ENCODE measurements at regions of chr19 and their contacts with region 1.

Region 1: DNA sequence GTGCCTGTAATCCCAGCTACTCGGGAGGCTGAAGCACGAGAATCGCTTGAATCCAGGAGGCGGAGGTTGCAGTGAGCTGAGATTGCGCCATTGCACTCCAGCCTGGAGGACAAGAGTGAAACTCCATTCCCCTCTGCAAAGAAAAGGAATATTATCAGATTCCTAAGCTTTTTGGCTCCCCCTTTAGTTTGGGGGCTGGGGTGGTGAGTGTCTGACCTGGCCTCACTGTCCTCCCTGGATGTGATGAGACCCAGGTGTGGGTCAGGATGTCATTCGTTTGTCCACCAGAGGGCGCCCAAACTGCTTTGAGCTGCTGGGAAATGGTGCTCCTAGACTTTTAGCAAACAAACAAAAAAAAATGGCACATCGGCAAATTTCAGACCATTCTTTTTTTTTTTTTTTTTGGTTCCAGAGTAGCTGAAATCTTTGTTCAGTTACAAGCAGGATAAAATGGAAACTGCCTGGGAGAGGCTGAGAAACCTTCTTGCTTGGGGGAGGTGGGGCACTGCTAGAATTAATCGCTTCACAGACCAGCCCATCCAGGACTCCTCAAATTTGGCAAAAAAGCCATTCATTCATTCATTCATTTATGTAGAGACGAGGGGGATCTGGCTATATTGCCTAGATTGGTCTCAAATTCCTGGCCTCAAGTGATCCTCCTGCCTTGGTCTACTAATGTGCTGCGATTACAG is 29.4 kb downstream of the SPC24 start:
- DNase-seq: peak; percentile 82
- H3K4me3 Mint-ChIP-seq: no peak overlapping the region
- H3K27ac Mint-ChIP-seq: no peak overlapping the region
- H3K4me1 Mint-ChIP-seq: no peaks in the 10 kb centered on the region
- H3K27me3 Mint-ChIP-seq: no peaks in the 10 kb centered on the region

Region 2: DNA sequence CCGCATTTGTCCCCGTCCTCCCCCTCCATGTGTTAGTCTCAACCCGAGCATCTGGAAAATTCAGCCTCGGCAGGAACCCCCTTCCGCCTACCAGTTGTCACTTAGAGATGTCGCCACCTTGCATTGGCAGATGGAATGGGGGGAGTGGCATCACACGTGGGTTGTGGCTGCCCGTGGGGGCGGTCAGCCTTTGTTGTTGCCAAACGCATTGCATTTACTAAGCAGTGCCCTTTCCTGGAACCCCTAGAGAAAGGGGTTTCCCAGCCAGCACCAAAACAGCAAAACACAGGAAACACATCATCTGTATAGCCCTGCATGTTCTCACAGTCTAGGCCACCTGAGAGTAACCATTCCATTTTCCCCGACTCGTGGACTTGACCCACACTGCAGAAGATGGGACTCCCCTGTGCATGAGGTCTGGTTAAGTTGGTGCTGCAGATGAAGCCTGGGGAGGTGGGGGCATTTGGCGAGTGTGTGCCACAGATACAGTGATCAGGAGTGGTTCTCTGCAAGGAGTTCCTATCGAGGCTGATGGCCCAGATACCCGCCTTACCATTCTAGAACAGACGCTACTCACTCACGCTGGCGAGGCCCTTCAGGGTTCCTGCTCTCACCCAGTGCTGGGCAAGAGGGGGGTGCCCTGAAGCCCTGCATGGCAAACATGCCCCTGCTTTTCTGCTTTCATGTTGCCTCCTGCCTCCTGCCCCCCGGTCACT is 328.4 kb before region 1 on chr19:
- CTCF ChIA-PET with region 1: no interaction called
- POLR2A ChIA-PET with region 1: no interaction called
- intact Hi-C with region 1: no loop called
- DNase-seq: peak; percentile 98
- H3K4me3 Mint-ChIP-seq: peak overlapping the region; percentile 76
- H3K27ac Mint-ChIP-seq: peak overlapping the region; percentile 99
- H3K4me1 Mint-ChIP-seq: peaks cover 32% of the 10 kb centered on the region
- H3K27me3 Mint-ChIP-seq: no peaks in the 10 kb centered on the region

Region 3: DNA sequence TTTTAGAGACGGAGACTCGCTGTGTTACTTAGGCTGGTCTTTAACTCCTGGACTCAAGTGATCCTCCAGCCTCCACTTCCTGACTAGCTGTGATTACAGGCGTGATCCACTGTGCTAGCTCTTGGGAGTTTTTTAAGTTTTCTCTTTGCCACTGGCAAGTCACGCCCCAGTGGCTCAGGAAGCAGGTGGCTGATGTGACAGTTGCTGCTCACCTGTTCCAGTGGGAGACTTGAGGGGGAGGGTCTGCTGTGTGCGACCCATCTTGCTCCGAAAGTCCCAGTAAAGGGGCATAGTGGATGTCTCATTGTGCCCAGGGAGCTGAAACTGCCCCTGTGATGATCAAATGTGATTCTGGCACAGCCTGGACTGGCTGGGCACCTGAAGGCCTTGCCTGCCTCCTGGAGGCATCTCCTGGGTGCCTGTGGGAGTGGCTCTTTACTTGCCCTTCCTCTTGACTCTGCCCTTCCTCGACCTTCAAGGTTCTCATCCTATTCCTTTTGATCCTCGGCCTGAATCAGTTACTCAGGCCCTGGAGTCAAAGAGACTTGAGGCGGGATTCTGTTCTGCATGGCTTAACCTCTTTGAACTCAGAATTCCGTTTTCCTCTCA is 157.5 kb before region 1 on chr19:
- CTCF ChIA-PET with region 1: no interaction called
- POLR2A ChIA-PET with region 1: no interaction called
- intact Hi-C with region 1: no loop called
- DNase-seq: no peak
- H3K4me3 Mint-ChIP-seq: no peak overlapping the region
- H3K27ac Mint-ChIP-seq: no peak overlapping the region
- H3K4me1 Mint-ChIP-seq: peaks cover 45% of the 10 kb centered on the region
- H3K27me3 Mint-ChIP-seq: no peaks in the 10 kb centered on the region

Region 4: GRCh38 chr19:11090054-11090900 is 35.9 kb before region 1 on chr19:
- CTCF ChIA-PET with region 1: interaction called, 17 read pairs
- POLR2A ChIA-PET with region 1: no interaction called
- intact Hi-C with region 1: no loop called
- DNase-seq: peak; percentile 99
- H3K4me3 Mint-ChIP-seq: peak overlapping the region; percentile 95
- H3K27ac Mint-ChIP-seq: peak overlapping the region; percentile 98
- H3K4me1 Mint-ChIP-seq: peaks cover 45% of the 10 kb centered on the region
- H3K27me3 Mint-ChIP-seq: no peaks in the 10 kb centered on the region

Region 5: DNA sequence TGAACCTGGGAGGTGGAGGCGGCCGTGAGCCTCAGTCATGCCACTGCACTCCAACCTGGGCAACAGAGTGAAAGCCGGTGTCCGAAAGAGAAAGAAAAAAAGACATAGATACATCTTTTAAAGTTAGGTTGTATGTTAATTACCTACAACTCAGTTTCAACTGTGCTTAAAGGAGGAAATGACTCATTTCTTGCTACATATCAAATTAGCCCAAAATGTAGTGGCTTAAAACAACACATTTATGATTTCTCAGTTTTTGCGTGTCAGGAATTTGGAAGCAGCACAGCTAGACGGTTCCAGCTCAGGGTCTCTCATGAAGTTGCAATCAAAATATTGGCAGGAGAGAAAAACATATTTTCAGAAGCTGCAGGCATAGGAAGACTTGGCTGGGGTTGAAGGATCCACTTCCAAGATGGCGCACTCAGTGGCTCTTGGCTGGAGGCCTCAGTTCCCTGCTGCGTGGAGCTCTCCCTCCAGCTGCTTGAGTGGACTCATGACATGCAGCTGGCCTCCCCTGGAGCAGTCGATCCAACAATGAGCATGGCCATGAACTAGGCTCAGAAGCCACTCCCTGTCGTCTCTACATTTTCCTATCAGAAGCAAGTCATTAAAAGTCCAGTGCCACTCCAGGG is 29.8 kb before region 1 on chr19:
- CTCF ChIA-PET with region 1: interaction called, 13 read pairs
- POLR2A ChIA-PET with region 1: interaction called, 3 read pairs
- intact Hi-C with region 1: no loop called
- DNase-seq: peak; percentile 70
- H3K4me3 Mint-ChIP-seq: peak overlapping the region; percentile 50
- H3K27ac Mint-ChIP-seq: peak overlapping the region; percentile 86
- H3K4me1 Mint-ChIP-seq: peaks cover 58% of the 10 kb centered on the region
- H3K27me3 Mint-ChIP-seq: no peaks in the 10 kb centered on the region

Region 6: DNA sequence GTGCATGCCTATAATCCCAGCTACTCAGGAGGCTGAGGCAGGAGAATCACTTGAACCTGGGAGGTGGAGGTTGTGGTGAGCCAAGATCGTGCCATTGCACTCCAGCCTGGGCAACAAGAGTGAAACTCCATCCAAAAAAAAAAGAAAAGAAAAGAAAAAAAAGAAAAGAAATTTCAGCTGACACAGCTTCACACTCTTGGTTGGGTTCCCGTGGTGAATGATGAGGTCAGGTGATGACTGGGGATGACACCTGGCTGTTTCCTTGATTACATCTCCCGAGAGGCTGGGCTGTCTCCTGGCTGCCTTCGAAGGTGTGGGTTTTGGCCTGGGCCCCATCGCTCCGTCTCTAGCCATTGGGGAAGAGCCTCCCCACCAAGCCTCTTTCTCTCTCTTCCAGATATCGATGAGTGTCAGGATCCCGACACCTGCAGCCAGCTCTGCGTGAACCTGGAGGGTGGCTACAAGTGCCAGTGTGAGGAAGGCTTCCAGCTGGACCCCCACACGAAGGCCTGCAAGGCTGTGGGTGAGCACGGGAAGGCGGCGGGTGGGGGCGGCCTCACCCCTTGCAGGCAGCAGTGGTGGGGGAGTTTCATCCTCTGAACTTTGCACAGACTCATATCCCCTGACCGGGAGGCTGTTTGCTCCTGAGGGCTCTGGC is 14.9 kb before region 1 on chr19:
- CTCF ChIA-PET with region 1: interaction called, 12 read pairs
- POLR2A ChIA-PET with region 1: interaction called, 3 read pairs
- intact Hi-C with region 1: no loop called
- DNase-seq: no peak
- H3K4me3 Mint-ChIP-seq: no peak overlapping the region
- H3K27ac Mint-ChIP-seq: no peak overlapping the region
- H3K4me1 Mint-ChIP-seq: no peaks in the 10 kb centered on the region
- H3K27me3 Mint-ChIP-seq: no peaks in the 10 kb centered on the region

Region 7: DNA sequence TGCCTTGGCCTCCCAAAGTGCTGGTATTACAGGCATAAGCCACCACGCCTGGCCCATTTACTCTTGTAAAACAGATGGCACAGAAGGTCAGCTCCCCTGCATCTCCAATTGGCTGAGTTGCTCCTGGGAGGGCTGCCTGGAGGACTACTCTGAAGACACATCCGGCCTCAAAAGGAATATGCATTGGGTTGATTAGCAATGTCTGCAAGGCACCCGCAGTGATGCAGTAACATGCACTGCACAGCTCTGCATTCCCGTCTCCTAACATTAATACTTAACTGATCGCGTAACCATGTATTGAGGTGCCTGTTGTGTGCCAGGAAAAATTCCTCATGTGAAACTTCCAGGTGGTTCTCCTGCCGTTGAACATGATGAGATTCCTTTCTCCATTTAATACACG is 349.7 kb after region 1 on chr19:
- CTCF ChIA-PET with region 1: no interaction called
- POLR2A ChIA-PET with region 1: no interaction called
- intact Hi-C with region 1: no loop called
- DNase-seq: no peak
- H3K4me3 Mint-ChIP-seq: no peak overlapping the region
- H3K27ac Mint-ChIP-seq: no peak overlapping the region
- H3K4me1 Mint-ChIP-seq: peaks cover 4% of the 10 kb centered on the region
- H3K27me3 Mint-ChIP-seq: peaks cover 6% of the 10 kb centered on the region

Measured in activated CD4-positive, alpha-beta memory T cell treated with anti-CD3 and anti-CD28 coated beads for 36 hours (primary cell).